ENCODE measurements at regions of chr1 and their contacts with region 1.

Region 1: DNA sequence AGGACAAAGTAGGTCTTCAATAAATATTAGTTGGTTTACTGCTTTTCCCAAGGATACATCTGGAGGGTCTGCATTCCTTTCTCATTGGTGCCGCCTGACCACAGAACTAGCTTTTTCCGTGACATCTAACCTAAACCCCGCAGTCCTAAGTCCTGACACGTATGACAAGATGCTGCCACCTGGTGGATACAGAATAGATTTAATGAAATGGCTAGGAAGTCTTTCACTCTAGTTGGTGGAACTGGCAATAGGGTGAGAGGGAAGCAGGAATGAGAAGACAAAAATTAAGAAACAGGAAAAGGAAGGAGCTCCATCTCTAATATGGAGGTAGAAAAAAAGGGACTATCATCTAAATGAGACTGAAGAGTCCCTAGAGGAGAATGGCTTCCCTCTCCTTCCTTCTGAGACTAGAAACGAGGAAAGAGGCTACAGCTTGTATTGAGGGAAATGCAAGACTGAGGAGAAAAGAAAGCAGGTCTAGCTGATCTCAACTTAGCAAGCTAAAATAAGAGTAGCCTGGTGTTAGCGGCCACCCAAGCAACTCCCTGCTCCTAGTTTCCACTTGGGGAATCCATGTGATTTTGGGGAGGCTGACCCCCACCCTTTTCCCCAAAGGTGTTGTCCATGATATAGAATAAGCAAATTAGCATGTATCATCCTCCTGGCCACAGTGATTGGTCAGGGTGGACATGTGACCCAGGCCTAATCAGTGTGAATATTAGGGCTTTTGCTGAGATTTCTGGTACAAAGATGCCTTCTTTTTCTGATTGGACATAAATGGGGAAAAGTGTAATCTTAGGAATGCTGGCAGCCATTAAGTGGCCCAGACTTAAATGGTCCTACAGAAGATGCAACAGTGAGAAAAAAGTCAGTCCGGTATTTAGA is 5.9 kb downstream of the RFX5 start:
- DNase-seq: peak in 1 of 2 donors; percentile 91
- H3K4me3 ChIP-seq: no peak overlapping the region
- H3K27ac ChIP-seq: peak overlapping the region in 4 of 5 donors; percentile 38 to 63 (median 51)
- H3K4me1 ChIP-seq: peaks cover 4 to 27% (median 17%) of the 10 kb centered on the region in 4 donors
- H3K27me3 ChIP-seq: no peaks in the 10 kb centered on the region
- CTCF ChIP-seq: peak in 5 of 7 experiments; percentile 52 to 88 (median 72)
- EP300 ChIP-seq: no peak
- POLR2A ChIP-seq: no peak

Region 2: GRCh38 chr1:151294742-151295462 is 46.2 kb before region 1 on chr1:
- intact Hi-C with region 1: loop called (anchors 5 kb)
- DNase-seq: no peak
- H3K4me3 ChIP-seq: no peak overlapping the region
- H3K27ac ChIP-seq: no peak overlapping the region
- H3K4me1 ChIP-seq: peaks cover 0 to 3% (median under 1%) of the 10 kb centered on the region in 4 donors
- H3K27me3 ChIP-seq: no peaks in the 10 kb centered on the region
- CTCF ChIP-seq: no peak
- EP300 ChIP-seq: no peak
- POLR2A ChIP-seq: no peak